CD4-positive, alpha-beta T cell (primary cell): ENCODE measurements at regions of chr3 and their contacts with region 1.

Region 1: GRCh38 chr3:52001443-52001974 is 5.8 kb upstream of the RPL29 start:
- DNase-seq: peak; percentile 78 to 92 (median 82)
- ATAC-seq: peak; percentile 99
- H3K4me3 ChIP-seq: no peak overlapping the region
- H3K4me3 Mint-ChIP-seq: peak overlapping the region; percentile 25
- H3K27ac ChIP-seq: no peak overlapping the region
- H3K27ac Mint-ChIP-seq: peak overlapping the region; percentile 20
- H3K4me1 ChIP-seq: peaks cover 22% of the 10 kb centered on the region
- H3K4me1 Mint-ChIP-seq: peaks cover 17% of the 10 kb centered on the region
- H3K27me3 ChIP-seq: no peaks in the 10 kb centered on the region
- H3K27me3 Mint-ChIP-seq: no peaks in the 10 kb centered on the region
- CTCF ChIP-seq: peak; percentile 96

Region 2: DNA sequence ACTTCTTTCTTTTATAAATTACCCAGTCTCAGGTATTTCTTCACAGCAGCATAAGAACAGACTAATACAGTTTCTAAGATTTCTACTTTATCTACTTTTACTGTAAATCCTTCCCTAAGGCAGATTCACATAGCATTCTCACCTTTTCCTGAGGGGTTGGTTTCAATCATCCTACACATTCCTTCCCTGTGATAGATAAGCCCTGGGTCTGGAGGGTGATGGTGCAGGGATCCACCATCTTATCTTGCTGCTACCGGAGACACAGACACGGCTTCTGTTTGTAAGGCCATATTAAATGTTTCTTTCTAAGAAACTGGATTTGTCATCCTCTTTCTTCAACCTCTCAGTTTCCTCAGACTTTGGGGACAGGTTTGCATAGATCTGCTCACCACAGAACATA is 132.2 kb before region 1 on chr3:
- CTCF ChIA-PET with region 1: no interaction called
- POLR2A ChIA-PET with region 1: no interaction called
- intact Hi-C with region 1: no loop called
- DNase-seq: no peak
- ATAC-seq: no peak
- H3K4me3 ChIP-seq: no peak overlapping the region
- H3K4me3 Mint-ChIP-seq: no peak overlapping the region
- H3K27ac ChIP-seq: no peak overlapping the region
- H3K27ac Mint-ChIP-seq: no peak overlapping the region
- H3K4me1 ChIP-seq: no peaks in the 10 kb centered on the region
- H3K4me1 Mint-ChIP-seq: no peaks in the 10 kb centered on the region
- H3K27me3 ChIP-seq: peaks cover 0 to 8% of the 10 kb centered on the region in 2 experiments
- H3K27me3 Mint-ChIP-seq: peaks cover 27% of the 10 kb centered on the region
- CTCF ChIP-seq: no peak

Region 3: GRCh38 chr3:52065264-52065756 is 63.8 kb after region 1 on chr3:
- CTCF ChIA-PET with region 1: no interaction called
- POLR2A ChIA-PET with region 1: no interaction called
- intact Hi-C with region 1: no loop called
- DNase-seq: no peak
- ATAC-seq: no peak
- H3K4me3 ChIP-seq: no peak overlapping the region
- H3K4me3 Mint-ChIP-seq: no peak overlapping the region
- H3K27ac ChIP-seq: no peak overlapping the region
- H3K27ac Mint-ChIP-seq: no peak overlapping the region
- H3K4me1 ChIP-seq: no peaks in the 10 kb centered on the region
- H3K4me1 Mint-ChIP-seq: no peaks in the 10 kb centered on the region
- H3K27me3 ChIP-seq: no peaks in the 10 kb centered on the region
- H3K27me3 Mint-ChIP-seq: no peaks in the 10 kb centered on the region
- CTCF ChIP-seq: no peak

Region 4: DNA sequence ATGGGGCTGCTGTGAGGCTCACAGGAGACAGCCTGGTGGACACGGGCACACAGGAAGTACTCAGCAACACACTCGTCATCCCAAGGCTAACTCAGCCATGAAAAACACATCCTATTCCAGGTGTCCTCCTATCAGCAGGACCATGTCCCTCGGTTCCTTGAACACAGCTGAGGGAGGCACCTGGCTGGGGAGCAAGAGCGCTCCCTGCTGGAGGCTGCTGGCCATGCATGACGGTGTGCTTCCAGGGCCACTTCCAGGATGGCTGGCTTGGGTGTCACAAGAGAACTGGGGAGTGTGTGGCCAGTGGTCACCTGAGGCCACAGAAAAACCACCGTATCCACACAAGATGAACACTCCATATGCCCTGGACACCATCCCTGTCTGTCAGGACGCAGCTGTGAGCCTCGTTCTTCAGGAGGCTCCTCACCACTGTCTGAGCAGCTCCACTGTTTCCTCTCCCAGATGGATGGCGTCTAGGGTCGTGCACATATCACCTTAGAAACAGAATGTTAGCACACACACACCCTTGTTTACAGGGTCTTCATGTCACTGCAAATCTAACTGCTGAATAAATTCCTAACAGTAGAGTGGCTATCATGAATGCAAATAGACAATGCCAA is 121.7 kb after region 1 on chr3:
- CTCF ChIA-PET with region 1: interaction called, 30 read pairs
- POLR2A ChIA-PET with region 1: interaction called, 8 read pairs
- intact Hi-C with region 1: loop called (anchors 1 kb)
- DNase-seq: peak; percentile 62 to 88 (median 74)
- ATAC-seq: peak; percentile 98
- H3K4me3 ChIP-seq: no peak overlapping the region
- H3K4me3 Mint-ChIP-seq: no peak overlapping the region
- H3K27ac ChIP-seq: no peak overlapping the region
- H3K27ac Mint-ChIP-seq: no peak overlapping the region
- H3K4me1 ChIP-seq: peaks cover 8% of the 10 kb centered on the region
- H3K4me1 Mint-ChIP-seq: no peaks in the 10 kb centered on the region
- H3K27me3 ChIP-seq: no peaks in the 10 kb centered on the region
- H3K27me3 Mint-ChIP-seq: no peaks in the 10 kb centered on the region
- CTCF ChIP-seq: peak; percentile 93

Region 5: GRCh38 chr3:52144034-52144795 is 142.7 kb after region 1 on chr3:
- CTCF ChIA-PET with region 1: interaction called, 25 read pairs
- POLR2A ChIA-PET with region 1: no interaction called
- intact Hi-C with region 1: loop called (anchors 1 kb)
- DNase-seq: peak; percentile 79 to 93 (median 87)
- ATAC-seq: peak; percentile 100
- H3K4me3 ChIP-seq: no peak overlapping the region
- H3K4me3 Mint-ChIP-seq: no peak overlapping the region
- H3K27ac ChIP-seq: no peak overlapping the region
- H3K27ac Mint-ChIP-seq: no peak overlapping the region
- H3K4me1 ChIP-seq: peaks cover 12% of the 10 kb centered on the region
- H3K4me1 Mint-ChIP-seq: peaks cover 8% of the 10 kb centered on the region
- H3K27me3 ChIP-seq: no peaks in the 10 kb centered on the region
- H3K27me3 Mint-ChIP-seq: no peaks in the 10 kb centered on the region
- CTCF ChIP-seq: peak; percentile 92

Region 6: DNA sequence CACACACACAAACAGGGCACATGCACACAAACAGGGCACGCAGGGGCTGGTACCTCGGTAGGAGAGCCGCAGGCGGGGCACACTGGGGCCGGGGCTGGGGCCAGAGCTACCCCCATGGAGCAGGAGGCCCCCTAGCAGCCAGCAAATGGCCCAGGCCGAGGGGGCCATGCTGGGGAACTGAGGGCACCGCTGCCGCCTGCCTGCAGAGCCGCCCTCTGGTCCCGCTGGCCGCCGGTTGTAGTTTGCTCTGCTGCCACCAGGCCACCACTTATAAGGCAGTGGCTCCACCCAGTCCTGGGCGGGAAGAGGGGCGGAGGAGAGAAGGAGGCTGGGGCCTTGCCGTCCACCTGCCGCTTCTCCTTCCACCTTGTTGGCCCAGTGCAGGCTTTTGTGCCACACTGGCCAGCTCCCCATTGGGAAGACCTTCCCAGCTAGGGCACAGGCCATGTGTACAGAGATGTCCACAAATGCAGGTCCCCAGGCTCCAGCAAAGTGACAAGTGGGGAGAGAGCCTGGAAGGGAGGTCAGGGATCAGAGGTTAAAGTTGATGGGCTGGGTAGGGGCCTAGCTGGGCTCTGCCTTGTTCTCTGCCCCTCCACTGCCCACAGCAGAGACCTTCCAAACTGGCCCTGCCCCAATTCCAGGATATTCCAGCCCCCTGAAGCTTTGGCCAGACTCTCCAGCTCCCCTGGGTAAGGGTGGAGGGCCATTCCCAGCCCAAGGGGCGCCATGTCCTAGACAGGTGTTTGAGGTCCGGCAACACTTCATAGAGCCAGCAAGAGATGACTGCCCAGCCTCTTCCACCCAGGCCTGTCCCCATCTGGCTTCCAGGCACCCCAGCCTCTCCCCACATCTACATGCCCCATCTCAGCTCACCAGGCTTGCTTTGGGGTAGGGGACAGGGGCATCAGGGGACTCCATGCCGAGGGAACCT is 443.6 kb after region 1 on chr3 and contains the start of gene SEMA3G:
- CTCF ChIA-PET with region 1: no interaction called
- POLR2A ChIA-PET with region 1: no interaction called
- intact Hi-C with region 1: loop called in 1 of 2 experiments (anchors 1 kb)
- DNase-seq: peak; percentile 55 to 86 (median 70)
- ATAC-seq: peak; percentile 96
- H3K4me3 ChIP-seq: peak within 1 kb of the TSS; percentile 29
- H3K4me3 Mint-ChIP-seq: no peak within 1 kb of the TSS
- H3K27ac ChIP-seq: no peak within 1 kb of the TSS
- H3K27ac Mint-ChIP-seq: no peak within 1 kb of the TSS
- H3K4me1 ChIP-seq: peaks cover 28% of the 10 kb centered on the region
- H3K4me1 Mint-ChIP-seq: peaks cover 14% of the 10 kb centered on the region
- H3K27me3 ChIP-seq: no peaks in the 10 kb centered on the region
- H3K27me3 Mint-ChIP-seq: no peaks in the 10 kb centered on the region
- CTCF ChIP-seq: peak; percentile 32
- total RNA-seq, gene SEMA3G: 0.34 to 0.69 TPM